ENCODE measurements at regions of chr21 and their contacts with region 1.

Region 1: DNA sequence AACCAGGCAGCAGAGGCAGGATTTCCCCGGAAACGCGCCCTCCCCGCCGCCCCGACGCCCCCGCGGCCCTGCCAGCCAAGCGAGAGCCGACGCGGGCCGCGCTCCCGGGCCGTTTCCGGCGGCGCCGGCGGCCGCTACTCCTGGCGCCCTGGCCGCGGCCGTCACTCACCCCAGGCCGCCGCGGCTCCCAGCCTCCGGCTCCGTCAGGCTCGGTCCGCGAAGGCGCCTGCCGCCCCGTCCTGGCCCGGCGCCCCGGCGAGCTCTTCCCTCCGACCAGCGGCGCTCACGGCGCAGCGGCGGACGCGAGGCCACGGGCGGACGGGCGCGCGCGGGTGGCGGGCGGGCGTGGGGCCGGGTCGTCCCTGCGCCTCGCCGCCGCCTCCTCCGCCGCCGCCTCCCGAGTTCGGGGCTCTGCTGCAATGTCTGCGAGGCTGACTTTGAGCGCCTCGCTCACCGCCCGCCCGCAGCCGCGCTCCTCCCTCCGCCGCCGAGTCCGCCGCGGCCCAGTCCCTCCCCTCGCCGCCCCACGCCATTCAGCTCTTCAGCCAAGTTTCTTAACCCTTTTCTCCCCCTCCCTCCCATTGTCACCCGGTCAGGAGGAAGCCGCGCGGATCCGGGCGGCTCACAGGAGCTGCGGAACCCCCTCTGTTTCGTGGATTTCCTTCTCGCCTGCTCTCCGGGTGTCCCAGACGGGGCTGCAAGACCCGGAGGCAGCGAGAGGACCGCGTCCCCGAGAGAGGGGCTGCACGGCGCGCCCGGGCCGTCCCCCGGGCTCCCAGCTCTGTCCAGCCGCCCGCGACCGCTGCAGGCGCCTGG is at the start of gene NRIP1:
- DNase-seq: peak; percentile 76

Region 2: DNA sequence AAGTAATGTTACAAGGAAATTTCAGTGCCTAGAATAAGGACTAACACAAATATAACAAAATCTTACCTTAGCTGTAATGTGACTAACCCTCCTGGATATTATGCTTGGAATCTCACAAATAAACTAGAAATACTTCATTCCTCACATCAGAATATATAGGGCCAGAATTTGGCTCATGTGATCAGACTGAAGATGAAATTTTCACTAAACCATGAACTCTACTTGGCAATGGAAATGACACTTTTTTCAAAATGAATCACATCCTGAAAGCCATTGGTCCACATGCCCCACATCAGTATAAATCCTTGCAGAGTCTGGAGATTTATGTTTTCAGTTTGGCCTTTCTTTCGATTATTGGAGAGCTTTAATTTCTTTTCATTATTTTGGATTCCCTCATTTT is 227.8 kb before region 1 on chr21:
- CTCF ChIA-PET with region 1: no interaction called
- POLR2A ChIA-PET with region 1: no interaction called
- DNase-seq: no peak

Region 3: GRCh38 chr21:14869984-14870874 is 194.6 kb before region 1 on chr21:
- CTCF ChIA-PET with region 1: no interaction called
- POLR2A ChIA-PET with region 1: no interaction called
- DNase-seq: no peak

Region 4: GRCh38 chr21:15080508-15080907 is 15.7 kb after region 1 on chr21:
- CTCF ChIA-PET with region 1: no interaction called
- POLR2A ChIA-PET with region 1: interaction called, 10 read pairs
- DNase-seq: no peak

Region 5: GRCh38 chr21:15159382-15160020 is 94.7 kb after region 1 on chr21:
- CTCF ChIA-PET with region 1: no interaction called
- POLR2A ChIA-PET with region 1: no interaction called
- DNase-seq: no peak

Region 6: DNA sequence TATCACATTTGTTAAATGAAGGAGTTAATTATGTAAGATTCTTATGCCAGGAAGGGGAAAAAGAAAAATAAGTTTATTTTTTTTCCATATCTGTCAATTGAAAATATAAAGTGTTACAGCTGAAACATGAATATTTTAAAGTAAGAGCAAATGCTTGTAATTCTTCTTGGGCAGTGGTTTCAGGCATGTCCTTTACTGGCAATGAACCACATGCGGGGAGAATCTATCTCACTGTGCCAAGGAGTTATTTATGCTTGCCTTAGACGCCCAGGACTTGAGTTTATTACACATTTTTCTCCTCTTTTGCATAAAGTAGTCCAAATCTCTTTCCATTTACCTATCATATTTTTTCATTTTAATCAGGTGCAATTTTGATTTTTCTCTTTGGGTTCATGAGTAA is 207.8 kb after region 1 on chr21:
- CTCF ChIA-PET with region 1: no interaction called
- POLR2A ChIA-PET with region 1: no interaction called
- DNase-seq: no peak